Mammary epithelial cell (primary cell): ENCODE measurements at regions of chr11 and their contacts with region 1.

Region 1: GRCh38 chr11:13008625-13009475 is at the start of gene RASSF10:
- DNase-seq: peak; percentile 91
- H3K4me3 ChIP-seq: peak within 1 kb of the TSS; percentile 54 to 66 (median 57)
- H3K27ac ChIP-seq: peak within 1 kb of the TSS; percentile 29
- H3K4me1 ChIP-seq: peaks cover 58% of the 10 kb centered on the region
- H3K27me3 ChIP-seq: no peaks in the 10 kb centered on the region
- CTCF ChIP-seq: no peak
- total RNA-seq, gene RASSF10: 6.0 to 7.5 TPM

Region 2: GRCh38 chr11:12377824-12378593 is 630.8 kb before region 1 on chr11:
- CTCF ChIA-PET with region 1: no interaction called
- dilution Hi-C with region 1: no loop called
- in situ Hi-C with region 1: no loop called
- intact Hi-C with region 1: loop called (anchors 10 kb)
- DNase-seq: peak; percentile 81
- H3K4me3 ChIP-seq: peak overlapping the region; percentile 63 to 74 (median 71)
- H3K27ac ChIP-seq: peak overlapping the region; percentile 93
- H3K4me1 ChIP-seq: peaks cover 28% of the 10 kb centered on the region
- H3K27me3 ChIP-seq: no peaks in the 10 kb centered on the region
- CTCF ChIP-seq: no peak

Region 3: GRCh38 chr11:12949453-12949852 is 59.4 kb before region 1 on chr11:
- CTCF ChIA-PET with region 1: no interaction called
- dilution Hi-C with region 1: no loop called
- in situ Hi-C with region 1: no loop called
- intact Hi-C with region 1: no loop called
- DNase-seq: no peak
- H3K4me3 ChIP-seq: no peak overlapping the region
- H3K27ac ChIP-seq: no peak overlapping the region
- H3K4me1 ChIP-seq: no peaks in the 10 kb centered on the region
- H3K27me3 ChIP-seq: no peaks in the 10 kb centered on the region
- CTCF ChIP-seq: no peak

Region 4: GRCh38 chr11:12989428-12990161 is 19.3 kb before region 1 on chr11:
- CTCF ChIA-PET with region 1: no interaction called
- dilution Hi-C with region 1: no loop called
- in situ Hi-C with region 1: no loop called
- intact Hi-C with region 1: loop called (anchors 2 kb)
- DNase-seq: peak; percentile 74
- H3K4me3 ChIP-seq: no peak overlapping the region
- H3K27ac ChIP-seq: no peak overlapping the region
- H3K4me1 ChIP-seq: peaks cover 16% of the 10 kb centered on the region
- H3K27me3 ChIP-seq: no peaks in the 10 kb centered on the region
- CTCF ChIP-seq: no peak

Region 5: DNA sequence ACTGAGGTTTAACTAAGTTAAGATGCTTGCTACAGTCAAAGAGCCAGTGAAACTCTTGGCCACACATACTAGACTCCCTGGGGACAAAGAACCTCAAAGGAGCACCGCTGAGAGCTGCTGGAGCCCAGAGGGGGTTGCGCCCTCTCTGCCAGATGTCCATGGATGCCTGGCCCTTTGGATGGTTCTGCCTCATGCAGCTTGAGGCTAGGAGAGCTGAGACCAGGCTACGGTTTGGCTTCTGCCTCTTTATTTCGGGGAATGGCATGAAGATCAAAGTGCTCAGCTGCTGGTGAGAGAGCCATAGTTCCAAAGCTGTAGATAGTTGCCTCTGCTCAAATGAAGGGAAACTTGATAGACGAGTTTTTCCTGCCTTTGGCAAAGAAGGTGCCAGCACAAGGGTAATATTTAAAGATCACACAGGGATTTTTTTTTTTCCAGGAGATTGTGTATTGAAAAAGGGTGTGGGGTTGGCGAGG is 43.3 kb after region 1 on chr11:
- CTCF ChIA-PET with region 1: no interaction called
- dilution Hi-C with region 1: loop called (anchors 5 kb)
- in situ Hi-C with region 1: no loop called
- intact Hi-C with region 1: no loop called
- DNase-seq: no peak
- H3K4me3 ChIP-seq: no peak overlapping the region
- H3K27ac ChIP-seq: no peak overlapping the region
- H3K4me1 ChIP-seq: peaks cover 42% of the 10 kb centered on the region
- H3K27me3 ChIP-seq: no peaks in the 10 kb centered on the region
- CTCF ChIP-seq: no peak

Region 6: DNA sequence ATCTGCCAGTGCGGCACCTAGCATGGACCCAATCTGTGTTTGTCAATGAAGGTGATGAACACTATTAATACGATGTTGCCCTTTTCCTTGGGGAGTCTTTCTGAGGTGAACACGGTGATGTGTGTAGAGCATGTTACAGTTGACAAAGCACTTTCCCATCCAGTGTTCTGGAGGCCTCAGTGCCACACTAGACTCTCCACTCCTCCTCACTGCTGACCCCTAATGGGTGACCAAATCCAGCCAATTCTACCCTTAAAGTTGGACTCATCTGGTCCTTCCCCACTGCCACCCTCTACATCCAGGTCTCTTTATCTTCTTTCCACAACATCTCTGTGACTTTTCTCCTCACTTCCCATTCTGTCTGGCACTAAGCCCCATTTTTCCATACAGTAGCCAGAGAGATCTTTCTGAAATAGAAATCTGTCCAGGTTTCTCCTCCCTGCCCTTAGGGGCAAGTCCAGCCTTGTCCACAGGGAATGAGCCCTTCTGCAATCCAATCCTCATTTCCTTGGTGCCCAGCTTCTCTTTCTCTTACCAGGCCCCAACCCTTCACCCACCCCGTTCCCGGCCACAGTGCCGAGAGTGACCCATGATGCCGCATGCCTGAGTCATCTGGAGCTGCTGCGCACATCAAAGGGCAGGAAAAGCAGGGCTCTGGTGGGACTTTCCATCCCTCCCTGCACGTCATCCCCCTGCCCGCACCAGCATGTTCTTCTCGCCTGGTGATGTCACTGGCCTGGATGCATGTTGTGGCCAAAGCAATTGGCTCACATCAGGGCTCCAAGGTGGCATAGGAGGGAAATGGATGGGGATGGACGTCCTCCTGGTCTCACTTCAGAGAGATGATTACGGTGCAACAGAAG is 64.5 kb after region 1 on chr11:
- CTCF ChIA-PET with region 1: no interaction called
- dilution Hi-C with region 1: no loop called
- in situ Hi-C with region 1: no loop called
- intact Hi-C with region 1: loop called (anchors 2 kb)
- DNase-seq: peak; percentile 100
- H3K4me3 ChIP-seq: no peak overlapping the region
- H3K27ac ChIP-seq: peak overlapping the region; percentile 88
- H3K4me1 ChIP-seq: peaks cover 40% of the 10 kb centered on the region
- H3K27me3 ChIP-seq: no peaks in the 10 kb centered on the region
- CTCF ChIP-seq: no peak

Region 7: GRCh38 chr11:13152736-13153533 is 144.1 kb after region 1 on chr11:
- CTCF ChIA-PET with region 1: interaction called, 5 read pairs
- dilution Hi-C with region 1: no loop called
- in situ Hi-C with region 1: no loop called
- intact Hi-C with region 1: loop called (anchors 1 kb)
- DNase-seq: no peak
- H3K4me3 ChIP-seq: no peak overlapping the region
- H3K27ac ChIP-seq: no peak overlapping the region
- H3K4me1 ChIP-seq: peaks cover 15% of the 10 kb centered on the region
- H3K27me3 ChIP-seq: no peaks in the 10 kb centered on the region
- CTCF ChIP-seq: peak; percentile 65 to 73

Region 8: DNA sequence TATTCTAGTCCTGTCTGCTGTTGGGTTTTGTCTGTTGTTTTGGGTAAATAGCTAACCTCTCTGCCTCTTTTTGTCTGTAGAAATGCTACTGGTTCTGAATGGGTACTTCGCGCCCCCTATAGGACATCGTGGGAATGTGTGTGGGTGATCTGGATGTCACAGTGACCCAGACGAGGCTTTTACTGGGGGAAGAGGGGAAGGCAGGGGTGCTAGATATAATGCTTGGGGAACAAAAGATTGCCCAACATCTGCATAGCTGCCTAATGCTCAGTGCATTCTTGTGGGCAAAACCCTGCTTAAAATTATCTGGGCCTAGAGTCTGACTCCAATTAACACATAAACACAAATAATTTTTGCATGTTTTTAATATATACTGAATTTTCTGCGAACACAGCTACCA is 326.5 kb after region 1 on chr11:
- CTCF ChIA-PET with region 1: no interaction called
- dilution Hi-C with region 1: no loop called
- in situ Hi-C with region 1: no loop called
- intact Hi-C with region 1: loop called (anchors 5 kb)
- DNase-seq: peak; percentile 62
- H3K4me3 ChIP-seq: no peak overlapping the region
- H3K27ac ChIP-seq: peak overlapping the region; percentile 83
- H3K4me1 ChIP-seq: peaks cover 76% of the 10 kb centered on the region
- H3K27me3 ChIP-seq: no peaks in the 10 kb centered on the region
- CTCF ChIP-seq: peak; percentile 84 to 86